HepG2 (cell line): ENCODE measurements at regions of chr16 and their contacts with region 1.

Region 1: DNA sequence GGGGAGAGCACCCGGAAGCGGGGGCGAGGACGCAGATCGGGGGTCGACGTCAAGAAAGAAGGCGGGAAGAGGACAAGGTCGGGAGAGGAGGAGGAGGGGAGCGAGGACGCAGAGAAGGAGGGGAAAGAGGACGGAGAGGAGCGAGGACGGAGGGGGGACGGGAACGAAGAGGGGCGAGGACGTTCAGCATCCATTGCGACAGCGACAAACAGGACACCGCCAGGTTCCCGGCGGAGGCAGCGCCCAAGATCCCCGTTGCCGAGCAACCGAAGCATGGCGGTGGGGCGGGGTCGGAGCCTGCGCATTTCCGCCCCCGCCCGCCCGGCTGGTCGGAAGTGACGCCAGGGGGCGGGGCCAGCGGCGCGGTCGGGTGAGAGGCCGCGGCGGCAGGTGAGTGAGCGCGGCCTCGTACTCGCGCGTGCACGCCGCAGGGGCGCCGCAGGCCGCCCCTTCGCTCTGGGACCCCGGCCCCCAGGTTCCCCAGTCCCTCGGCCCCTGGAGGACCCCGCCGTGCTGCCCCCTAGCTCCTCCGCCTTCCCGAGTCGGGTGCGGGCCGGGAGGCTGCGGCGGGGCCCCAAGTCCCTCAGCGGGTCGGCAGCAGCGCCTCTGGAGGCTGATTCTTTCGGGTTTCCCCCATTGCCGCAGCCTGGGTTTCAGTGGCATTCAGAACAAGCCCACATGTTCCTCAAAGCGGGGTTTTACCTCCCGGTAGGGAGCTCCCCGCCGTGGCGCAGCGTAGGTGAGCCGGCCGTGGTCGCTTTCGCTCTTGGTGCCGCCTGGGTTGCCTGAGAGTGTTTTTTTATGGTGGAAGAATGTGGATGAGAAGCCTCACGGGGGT is at the start of gene FAM234A:
- DNase-seq: peak; percentile 87
- ATAC-seq: peak; percentile 86
- H3K4me3 ChIP-seq: peak within 1 kb of the TSS; percentile 73 to 84 (median 81)
- H3K27ac ChIP-seq: peak within 1 kb of the TSS; percentile 85
- H3K4me1 ChIP-seq: peaks cover 15% of the 10 kb centered on the region
- H3K27me3 ChIP-seq: no peaks in the 10 kb centered on the region; a peak in 1 of 5 replicates
- CTCF ChIP-seq: peak; percentile 55
- EP300 ChIP-seq: 0 out of 4 replicates have a peak, but pooled peaks of 1 of the 2 experiments have one; percentile 6
- POLR2A ChIP-seq: peak; percentile 81 to 89
- RAD21 ChIP-seq: peak; percentile 29
- total RNA-seq, gene FAM234A: 15.5 and 29.2 TPM in 2 replicates

Region 2: DNA sequence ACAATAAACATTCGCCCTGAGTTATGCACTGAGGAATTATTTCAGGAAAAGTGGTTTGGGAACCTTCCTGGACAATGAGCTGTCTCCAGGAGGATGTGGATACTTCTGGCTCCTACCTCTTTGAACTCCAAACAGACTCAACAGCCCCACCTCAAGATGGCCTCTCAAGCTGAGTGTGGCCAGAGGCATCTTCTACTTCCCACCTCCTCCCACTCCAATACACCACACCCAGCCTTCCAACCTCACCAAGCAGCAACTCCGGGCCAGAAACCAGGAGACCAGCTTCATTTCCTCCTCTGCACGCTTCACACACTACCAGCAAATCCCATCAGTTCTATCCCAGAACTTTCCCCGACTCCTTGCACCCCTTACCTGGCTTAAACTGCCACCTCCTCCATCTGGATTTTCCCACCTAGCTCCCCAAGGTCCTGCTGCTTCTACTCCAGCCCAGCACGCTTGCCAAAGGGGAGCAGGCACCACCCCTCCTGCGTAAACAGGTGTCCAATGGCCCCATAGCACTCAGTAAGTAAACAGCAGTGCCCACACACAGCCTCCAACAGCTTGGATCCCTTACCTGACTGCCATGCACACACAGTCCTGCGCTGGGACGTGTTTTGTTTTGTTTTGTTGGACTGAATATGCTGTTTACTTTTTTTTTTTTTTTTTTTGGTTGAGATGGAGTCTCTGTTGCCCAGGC is 42.7 kb before region 1 on chr16:
- CTCF ChIA-PET with region 1: no interaction called
- POLR2A ChIA-PET with region 1: no interaction called
- in situ Hi-C with region 1: no loop called
- intact Hi-C with region 1: no loop called
- DNase-seq: no peak
- ATAC-seq: no peak
- H3K4me3 ChIP-seq: no peak overlapping the region
- H3K27ac ChIP-seq: no peak overlapping the region
- H3K4me1 ChIP-seq: no peaks in the 10 kb centered on the region
- H3K27me3 ChIP-seq: no peaks in the 10 kb centered on the region
- CTCF ChIP-seq: no peak
- EP300 ChIP-seq: no peak
- POLR2A ChIP-seq: no peak
- RAD21 ChIP-seq: no peak

Region 3: DNA sequence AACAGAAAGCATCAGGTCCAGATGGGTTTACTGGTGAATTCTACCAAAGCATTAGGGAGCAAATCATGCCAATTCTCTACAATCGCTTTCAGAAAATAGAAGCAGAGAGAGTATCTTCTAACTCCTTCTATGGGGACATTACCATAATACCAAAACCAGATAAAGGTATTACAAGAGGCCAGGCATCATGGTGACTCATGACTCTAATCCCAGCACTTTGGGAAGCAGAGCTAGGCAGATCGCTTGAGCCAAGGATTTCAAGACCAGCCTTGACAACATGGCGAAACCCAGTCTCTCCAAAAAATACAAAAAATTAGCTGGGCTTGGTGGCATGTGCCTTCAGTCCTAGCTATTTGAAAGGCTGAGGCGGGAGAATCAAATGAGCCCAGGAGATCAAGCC is 31.4 kb before region 1 on chr16:
- CTCF ChIA-PET with region 1: no interaction called
- POLR2A ChIA-PET with region 1: no interaction called
- in situ Hi-C with region 1: no loop called
- intact Hi-C with region 1: no loop called
- DNase-seq: no peak
- ATAC-seq: no peak
- H3K4me3 ChIP-seq: no peak overlapping the region
- H3K27ac ChIP-seq: no peak overlapping the region
- H3K4me1 ChIP-seq: no peaks in the 10 kb centered on the region
- H3K27me3 ChIP-seq: no peaks in the 10 kb centered on the region
- CTCF ChIP-seq: no peak
- EP300 ChIP-seq: no peak
- POLR2A ChIP-seq: no peak
- RAD21 ChIP-seq: no peak

Region 4: DNA sequence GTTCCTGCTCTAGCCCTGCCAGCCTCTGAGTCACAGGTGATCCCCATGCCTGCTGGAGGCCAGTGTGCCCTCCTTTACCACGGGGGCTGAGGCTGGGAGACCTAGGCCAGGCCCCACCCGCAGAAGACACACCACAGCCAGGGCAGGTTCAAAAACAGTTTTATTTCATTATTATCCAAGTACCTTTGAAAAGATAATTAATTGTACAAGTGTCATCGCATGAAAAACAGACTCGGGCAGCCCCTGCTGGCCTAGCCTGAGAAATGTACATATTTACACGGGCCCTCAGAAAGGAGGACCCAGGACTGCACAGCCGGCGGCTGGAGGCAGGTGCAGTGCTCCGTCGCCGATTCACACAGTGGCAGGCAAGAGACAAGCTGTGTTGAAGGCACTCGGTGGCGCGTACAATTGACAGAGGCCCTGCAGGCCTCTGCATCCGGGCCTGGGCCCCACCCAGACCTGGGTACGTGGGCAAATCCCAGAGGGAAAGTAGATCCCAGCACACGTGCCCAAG is 52.7 kb after region 1 on chr16:
- CTCF ChIA-PET with region 1: no interaction called
- POLR2A ChIA-PET with region 1: no interaction called
- in situ Hi-C with region 1: no loop called
- intact Hi-C with region 1: loop called (anchors 5 kb)
- DNase-seq: no peak
- ATAC-seq: no peak
- H3K4me3 ChIP-seq: no peak overlapping the region
- H3K27ac ChIP-seq: no peak overlapping the region
- H3K4me1 ChIP-seq: no peaks in the 10 kb centered on the region
- H3K27me3 ChIP-seq: peaks cover 3 to 11% of the 10 kb centered on the region in 2 experiments; a peak in 2 of 5 replicates
- CTCF ChIP-seq: no peak
- EP300 ChIP-seq: no peak
- POLR2A ChIP-seq: no peak
- RAD21 ChIP-seq: no peak